ENCODE measurements at regions of chr11 and their contacts with region 1.

Region 1: DNA sequence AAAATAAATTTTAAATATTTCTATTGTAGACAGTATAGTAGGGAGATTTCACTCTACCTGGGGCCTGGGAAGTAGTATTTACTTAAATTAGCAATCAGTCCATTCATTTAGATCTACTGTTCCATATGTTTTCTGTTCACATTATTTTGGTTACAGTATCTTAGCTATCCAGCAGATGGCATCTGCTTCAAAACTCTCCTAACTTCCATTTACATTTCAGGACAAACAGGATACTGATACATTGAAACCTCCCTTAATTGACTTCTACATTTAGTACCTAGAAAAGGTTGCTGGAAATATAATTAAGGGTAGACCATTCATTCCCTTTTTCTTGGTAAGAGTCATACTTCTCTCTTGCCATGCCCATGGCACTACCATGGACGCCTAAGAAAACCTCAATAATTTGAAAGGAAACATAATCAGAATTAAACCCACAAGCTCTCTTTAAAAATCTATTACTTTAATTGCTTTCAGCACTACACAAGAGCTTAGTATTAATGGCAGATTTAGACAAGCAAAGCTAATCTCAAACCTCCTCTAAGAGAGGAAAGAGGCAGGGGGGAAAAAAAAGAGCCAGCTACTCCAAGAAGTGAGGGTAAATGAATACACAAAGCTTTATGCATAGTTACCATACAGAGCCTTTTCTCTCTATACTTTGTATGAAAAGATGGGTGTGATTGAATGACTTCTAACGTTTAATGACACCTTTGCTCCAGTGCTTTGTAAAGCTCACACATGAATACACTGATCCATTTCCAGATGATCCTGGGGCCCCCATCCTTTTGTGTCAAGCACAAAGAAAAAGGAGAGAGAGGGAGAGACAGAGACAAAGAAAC is 131.2 kb upstream of the MTMR2 start:
- DNase-seq: no peak
- ATAC-seq: peak in 3 of 4 donors; percentile 80 to 85 (median 82)
- H3K4me3 ChIP-seq: no peak overlapping the region
- H3K27ac ChIP-seq: no peak overlapping the region
- H3K4me1 ChIP-seq: no peaks in the 10 kb centered on the region
- H3K27me3 ChIP-seq: no peaks in the 10 kb centered on the region
- CTCF ChIP-seq: peak; percentile 21 to 42 (median 34)

Region 2: DNA sequence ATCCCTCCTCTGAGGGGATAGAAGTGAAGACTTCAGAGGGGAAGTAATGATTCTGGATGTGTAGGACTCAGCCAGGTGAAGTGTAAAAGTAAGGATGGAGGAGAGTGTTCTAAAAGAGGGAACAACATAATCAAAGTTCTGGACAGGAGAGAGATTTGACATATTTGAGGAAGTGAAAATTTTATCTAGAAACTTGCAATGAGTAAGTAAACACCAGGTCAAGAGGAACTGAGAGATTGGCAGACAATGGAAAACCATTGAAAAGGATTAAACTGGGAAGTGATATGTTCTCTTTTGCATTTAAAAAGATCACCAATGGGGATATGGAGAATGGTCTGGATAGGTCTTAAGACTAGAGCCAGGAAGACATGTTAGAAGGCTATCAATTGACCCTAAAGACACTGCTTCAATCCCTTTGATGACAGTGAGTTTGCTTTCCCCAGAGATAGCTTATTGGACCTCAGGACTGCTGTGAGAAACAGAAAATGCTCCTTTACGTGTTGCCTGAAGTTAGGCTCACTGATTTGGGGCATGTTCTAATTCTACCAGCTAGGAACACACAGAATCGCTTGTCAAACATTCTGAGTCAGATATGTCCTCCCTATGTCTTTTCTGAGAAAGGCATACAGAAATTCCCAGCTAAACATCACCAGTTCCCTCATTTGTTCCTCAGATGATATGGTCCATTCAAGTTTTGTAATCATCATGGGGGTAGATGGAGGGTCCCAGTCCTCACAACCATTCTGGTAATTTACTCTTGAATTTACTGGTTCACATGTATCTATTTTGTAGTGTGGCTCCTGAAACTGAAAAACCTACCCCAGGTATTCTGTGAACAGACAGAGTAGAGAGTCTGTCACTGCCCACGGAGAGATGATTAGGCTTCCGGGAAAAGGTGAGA is 143.0 kb after region 1 on chr11:
- intact Hi-C with region 1: no loop called
- DNase-seq: no peak
- ATAC-seq: peak in 1 of 4 donors; percentile 37
- H3K4me3 ChIP-seq: no peak overlapping the region
- H3K27ac ChIP-seq: peak overlapping the region in 2 of 4 donors; percentile 2 to 36
- H3K4me1 ChIP-seq: peaks cover 0 to 11% (median 8%) of the 10 kb centered on the region in 3 donors
- H3K27me3 ChIP-seq: no peaks in the 10 kb centered on the region
- CTCF ChIP-seq: no peak

Region 3: GRCh38 chr11:96254087-96254486 is 199.0 kb after region 1 on chr11:
- intact Hi-C with region 1: no loop called
- DNase-seq: no peak
- ATAC-seq: peak in 3 of 4 donors; percentile 26 to 51 (median 31)
- H3K4me3 ChIP-seq: no peak overlapping the region
- H3K27ac ChIP-seq: peak overlapping the region in 2 of 4 donors; percentile 4 to 47
- H3K4me1 ChIP-seq: peaks cover 0 to 21% (median 8%) of the 10 kb centered on the region in 3 donors
- H3K27me3 ChIP-seq: no peaks in the 10 kb centered on the region
- CTCF ChIP-seq: no peak

Region 4: GRCh38 chr11:96338910-96339705 is 284.0 kb after region 1 on chr11:
- intact Hi-C with region 1: loop called in 1 of 3 experiments (anchors 10 kb)
- DNase-seq: peak in 1 of 6 donors; percentile 40
- ATAC-seq: peak in 2 of 4 donors; percentile 6 to 16
- H3K4me3 ChIP-seq: peak overlapping the region in 2 of 4 donors; percentile 3 to 56
- H3K27ac ChIP-seq: peak overlapping the region in 3 of 4 donors; percentile 12 to 78 (median 78)
- H3K4me1 ChIP-seq: peaks cover 0 to 12% (median 7%) of the 10 kb centered on the region in 3 donors
- H3K27me3 ChIP-seq: no peaks in the 10 kb centered on the region
- CTCF ChIP-seq: no peak